ENCODE measurements at regions of chr1 and their contacts with region 1.

Region 1: GRCh38 chr1:203702130-203702577 is 62.8 kb upstream of the LAX1 start:
- DNase-seq: peak; percentile 56
- CTCF ChIP-seq: peak; percentile 77

Region 2: DNA sequence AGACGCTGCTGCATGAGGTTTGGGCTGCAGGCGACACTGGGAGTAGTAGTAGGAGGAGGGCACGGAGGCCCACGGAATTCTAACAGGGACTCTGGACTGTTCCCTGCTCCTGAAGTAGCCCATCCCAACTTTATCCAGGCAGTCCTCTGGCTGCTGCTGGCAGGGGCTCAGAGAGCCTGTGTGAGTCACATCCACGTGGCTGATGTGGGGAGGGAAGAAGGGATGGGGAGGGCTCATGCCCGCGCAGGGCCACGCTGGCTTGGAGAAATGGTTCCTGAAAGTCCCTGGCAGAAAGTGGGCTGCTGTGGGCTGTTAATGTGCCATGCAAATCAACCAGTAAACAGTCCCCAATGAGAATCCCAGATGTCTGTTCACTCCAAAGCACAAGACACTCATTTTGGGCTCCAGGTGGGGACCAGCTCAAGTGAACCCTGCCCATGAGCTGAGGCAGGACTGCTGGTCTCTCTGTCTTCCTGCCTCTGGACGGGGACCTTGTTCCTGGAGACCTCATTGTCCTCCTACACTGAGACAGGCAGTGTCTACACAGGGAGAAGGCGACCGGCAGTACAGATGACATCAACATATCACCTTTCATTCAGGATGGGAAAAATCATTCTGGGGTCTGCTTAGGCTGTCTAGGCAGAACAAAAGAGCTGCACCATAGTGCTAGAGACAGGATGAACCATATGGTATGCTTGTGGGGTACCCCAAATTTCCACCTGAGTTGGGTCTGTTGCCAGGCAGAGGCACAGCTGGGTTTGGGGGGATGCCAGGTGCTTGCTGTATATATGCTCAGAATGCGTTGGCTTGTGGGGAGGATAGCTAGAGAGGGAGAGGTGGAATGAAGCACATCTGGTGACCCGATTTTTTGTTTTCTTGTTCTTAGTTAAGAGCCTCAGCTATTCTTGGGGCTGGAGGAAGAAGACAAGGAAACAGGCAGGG is 293.4 kb before region 1 on chr1:
- CTCF ChIA-PET with region 1: no interaction called
- POLR2A ChIA-PET with region 1: no interaction called
- DNase-seq: no peak
- CTCF ChIP-seq: no peak

Region 3: DNA sequence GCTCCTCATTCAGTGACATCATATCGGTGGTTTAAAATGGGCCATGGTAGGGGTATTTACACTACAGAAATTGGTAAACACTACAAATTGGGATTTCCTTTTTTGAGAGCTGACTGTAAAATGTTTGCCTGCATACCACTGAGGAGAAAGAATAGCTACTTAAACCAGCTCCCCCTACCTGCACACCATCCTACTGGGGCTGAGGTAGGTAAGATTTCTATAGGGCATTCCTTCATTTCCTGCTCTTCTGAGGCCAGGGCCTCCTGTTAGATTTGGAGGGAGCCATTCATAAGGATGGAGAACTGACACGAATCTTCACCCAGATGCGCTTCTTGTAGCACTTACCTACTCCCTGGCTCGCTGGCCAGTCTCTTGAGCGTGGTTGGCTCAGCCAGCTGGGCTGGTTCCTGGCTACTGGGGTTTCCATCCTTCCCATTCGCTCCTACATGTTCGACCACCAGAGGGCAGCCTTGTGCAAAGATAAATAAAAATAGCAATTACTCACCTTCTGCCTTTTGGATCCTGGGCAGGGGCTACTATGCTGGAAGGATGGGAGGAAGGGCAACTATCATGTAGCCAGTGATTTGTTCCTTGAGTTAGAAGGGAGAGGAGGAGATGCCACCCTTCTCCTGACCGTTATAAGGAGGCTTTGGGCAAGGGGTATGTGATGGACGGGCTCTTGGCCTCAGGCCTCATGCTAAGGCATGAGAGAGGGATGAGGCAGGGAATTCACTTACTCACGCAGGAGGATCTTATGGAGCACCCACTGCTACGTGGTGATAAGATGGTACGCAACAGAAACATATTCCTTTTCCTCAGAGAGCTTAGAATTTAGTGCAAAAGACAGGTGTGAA is 197.5 kb before region 1 on chr1:
- CTCF ChIA-PET with region 1: interaction called, 223 read pairs
- POLR2A ChIA-PET with region 1: interaction called, 4 read pairs
- DNase-seq: peak; percentile 82
- CTCF ChIP-seq: peak; percentile 84

Region 4: GRCh38 chr1:203593723-203594122 is 108.4 kb before region 1 on chr1:
- CTCF ChIA-PET with region 1: interaction called, 39 read pairs
- POLR2A ChIA-PET with region 1: interaction called, 4 read pairs
- DNase-seq: no peak
- CTCF ChIP-seq: peak; percentile 27

Region 5: DNA sequence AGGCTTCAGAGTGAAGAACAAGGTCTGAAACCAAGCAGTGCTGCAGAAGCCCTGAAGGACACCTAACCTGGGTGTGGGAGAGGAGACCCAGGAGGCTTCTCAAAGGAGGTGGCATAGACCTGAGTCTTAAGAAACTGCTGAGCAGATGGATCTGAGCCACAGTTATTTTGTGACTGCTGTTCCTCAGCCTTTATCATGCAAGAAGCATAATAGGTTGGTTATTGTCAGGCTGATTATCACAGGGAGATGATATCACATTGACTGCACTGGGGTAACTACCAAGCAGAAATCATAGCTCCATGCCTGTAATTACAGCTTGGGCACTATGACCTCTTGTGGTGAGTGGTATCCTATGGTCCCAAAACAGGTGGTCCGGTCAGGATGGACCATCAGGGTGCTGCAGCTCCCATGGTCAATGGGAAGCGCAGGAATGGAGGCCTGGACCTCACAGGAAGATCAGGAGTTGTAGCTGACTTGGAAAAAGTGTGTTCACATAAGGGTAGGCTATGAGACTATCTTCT is 87.0 kb before region 1 on chr1:
- CTCF ChIA-PET with region 1: interaction called, 19 read pairs
- POLR2A ChIA-PET with region 1: no interaction called
- DNase-seq: no peak
- CTCF ChIP-seq: no peak

Region 6: DNA sequence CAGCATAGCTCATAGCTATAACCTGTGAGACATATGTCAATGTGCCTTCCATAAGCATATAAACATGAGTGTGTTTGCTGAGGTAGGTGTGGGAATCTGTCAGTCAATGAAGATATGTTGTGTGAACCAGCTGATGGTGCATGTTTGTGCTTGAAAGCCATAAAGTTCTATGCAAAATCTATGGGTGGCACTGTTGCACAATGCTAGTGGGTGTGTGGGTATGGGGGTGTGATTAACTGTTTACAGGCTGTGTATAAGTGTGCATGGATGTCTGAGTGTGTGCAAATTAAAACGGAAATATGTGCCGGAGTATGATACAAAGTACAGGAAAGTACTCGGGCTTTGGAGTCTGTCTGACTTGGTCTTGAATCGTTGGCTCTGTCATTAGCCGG is 76.5 kb before region 1 on chr1:
- CTCF ChIA-PET with region 1: interaction called, 33 read pairs
- POLR2A ChIA-PET with region 1: no interaction called
- DNase-seq: peak; percentile 54
- CTCF ChIP-seq: peak; percentile 41

Region 7: GRCh38 chr1:203720262-203720661 is 18.1 kb after region 1 on chr1:
- CTCF ChIA-PET with region 1: interaction called, 23 read pairs
- POLR2A ChIA-PET with region 1: no interaction called
- DNase-seq: no peak
- CTCF ChIP-seq: no peak

Region 8: GRCh38 chr1:203835494-203835893 is 133.3 kb after region 1 on chr1:
- CTCF ChIA-PET with region 1: no interaction called
- POLR2A ChIA-PET with region 1: no interaction called
- DNase-seq: no peak
- CTCF ChIP-seq: no peak